Posterior vena cava (tissue), 2 donors: ENCODE measurements at regions of chr18 and their contacts with region 1.

Region 1: DNA sequence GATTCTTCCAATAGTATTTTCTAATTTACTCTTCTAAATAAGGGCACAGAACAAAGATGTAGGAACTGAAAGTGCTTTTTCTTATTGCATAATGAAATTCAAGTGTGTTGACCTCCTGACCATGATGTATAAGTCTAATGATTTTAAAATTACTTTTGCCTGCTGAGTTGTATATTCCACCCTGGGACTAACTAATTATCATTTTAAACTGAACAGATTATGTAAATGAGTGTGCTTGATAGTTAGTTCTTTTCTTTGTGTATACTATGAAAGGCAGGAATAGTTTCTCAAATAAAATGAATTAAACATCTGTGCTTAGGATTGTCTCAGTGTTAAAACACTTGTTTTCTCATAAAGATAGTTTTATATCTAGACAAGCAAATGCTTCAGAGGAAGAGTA is 284.5 kb downstream of the RIT2 start:
- DNase-seq: no peak

Region 2: DNA sequence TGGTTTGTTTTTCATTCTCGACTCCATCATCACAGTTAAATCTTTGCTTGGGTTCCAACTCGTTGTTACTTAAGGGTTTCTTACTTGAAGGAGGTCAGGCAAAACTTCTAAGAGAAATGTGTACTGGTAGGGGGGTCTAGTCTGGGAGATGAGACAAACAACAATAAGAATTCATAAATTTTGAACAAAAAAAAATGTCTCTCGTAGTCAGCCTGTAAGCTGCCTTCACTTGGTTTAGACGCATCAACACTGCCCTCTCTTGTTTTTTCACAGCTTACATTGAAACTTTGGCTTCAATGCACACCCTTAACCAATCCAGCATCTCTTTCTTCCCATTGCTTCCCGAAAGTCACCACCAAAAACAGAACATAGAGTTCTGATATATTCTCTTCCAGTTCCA is 1452.3 kb before region 1 on chr18:
- intact Hi-C with region 1: no loop called
- DNase-seq: no peak

Region 3: DNA sequence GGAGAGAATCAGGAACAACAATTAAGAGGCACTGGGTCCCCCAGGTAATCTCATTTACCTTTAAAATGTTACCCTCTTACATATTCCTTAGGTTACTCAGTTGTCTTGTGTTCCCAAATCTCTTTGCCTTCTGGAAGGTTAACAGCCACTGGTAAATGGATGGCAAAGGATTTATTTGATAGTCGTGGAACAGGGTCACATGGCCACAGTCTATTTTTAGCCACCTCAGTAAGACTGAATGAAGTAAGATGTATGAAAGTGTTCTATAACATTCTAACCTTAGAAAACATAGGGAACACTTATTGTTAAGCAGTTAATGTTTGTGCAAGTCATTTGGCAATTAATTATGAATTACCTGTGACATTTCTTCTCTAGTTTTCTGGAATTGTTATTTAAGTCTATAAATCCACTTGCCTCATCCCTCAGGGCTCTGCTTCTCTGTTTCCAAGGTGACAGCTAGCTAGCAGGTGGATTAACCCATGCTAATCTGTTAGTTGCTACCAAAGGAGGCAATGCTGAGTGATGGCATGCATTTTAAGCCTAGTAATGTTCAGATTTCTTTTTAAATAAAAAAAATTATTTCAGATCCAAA is 664.9 kb before region 1 on chr18:
- intact Hi-C with region 1: loop called in 1 of 2 experiments (anchors 5 kb)
- DNase-seq: no peak